IMR-90 (cell line): ENCODE measurements at regions of chr7 and their contacts with region 1.

Region 1: GRCh38 chr7:41010418-41010817 is 692.5 kb downstream of the INHBA start:
- DNase-seq: peak; percentile 10
- ATAC-seq: peak; percentile 54
- H3K4me3 ChIP-seq: no peak overlapping the region
- H3K27ac ChIP-seq: 0 out of 2 replicates have a peak overlapping the region, but pooled peaks have one; percentile 34
- H3K4me1 ChIP-seq: peaks cover 13% of the 10 kb centered on the region
- H3K27me3 ChIP-seq: no peaks in the 10 kb centered on the region
- CTCF ChIP-seq: no peak
- POLR2A ChIP-seq: no peak
- RAD21 ChIP-seq: no peak

Region 2: GRCh38 chr7:40374575-40374974 is 635.8 kb before region 1 on chr7:
- CTCF ChIA-PET with region 1: no interaction called
- POLR2A ChIA-PET with region 1: no interaction called
- dilution Hi-C with region 1: no loop called
- in situ Hi-C with region 1: no loop called
- intact Hi-C with region 1: no loop called
- DNase-seq: peak; percentile 22
- ATAC-seq: no peak
- H3K4me3 ChIP-seq: no peak overlapping the region
- H3K27ac ChIP-seq: no peak overlapping the region
- H3K4me1 ChIP-seq: no peaks in the 10 kb centered on the region
- H3K27me3 ChIP-seq: no peaks in the 10 kb centered on the region
- CTCF ChIP-seq: no peak
- POLR2A ChIP-seq: no peak
- RAD21 ChIP-seq: no peak

Region 3: GRCh38 chr7:40658729-40659128 is 351.7 kb before region 1 on chr7:
- CTCF ChIA-PET with region 1: no interaction called
- POLR2A ChIA-PET with region 1: no interaction called
- dilution Hi-C with region 1: no loop called
- in situ Hi-C with region 1: no loop called
- intact Hi-C with region 1: no loop called
- DNase-seq: peak; percentile 57
- ATAC-seq: peak; percentile 29; the same call in 1 of the 2 replicates
- H3K4me3 ChIP-seq: no peak overlapping the region
- H3K27ac ChIP-seq: no peak overlapping the region
- H3K4me1 ChIP-seq: no peaks in the 10 kb centered on the region; the same call in 1 of the 2 replicates
- H3K27me3 ChIP-seq: no peaks in the 10 kb centered on the region
- CTCF ChIP-seq: no peak
- POLR2A ChIP-seq: no peak
- RAD21 ChIP-seq: no peak

Region 4: GRCh38 chr7:41203542-41203941 is 193.1 kb after region 1 on chr7:
- CTCF ChIA-PET with region 1: no interaction called
- POLR2A ChIA-PET with region 1: interaction called, 19 read pairs
- dilution Hi-C with region 1: no loop called
- in situ Hi-C with region 1: no loop called
- intact Hi-C with region 1: no loop called
- DNase-seq: peak; percentile 24
- ATAC-seq: no peak
- H3K4me3 ChIP-seq: no peak overlapping the region
- H3K27ac ChIP-seq: no peak overlapping the region
- H3K4me1 ChIP-seq: no peaks in the 10 kb centered on the region
- H3K27me3 ChIP-seq: no peaks in the 10 kb centered on the region
- CTCF ChIP-seq: no peak
- POLR2A ChIP-seq: no peak
- RAD21 ChIP-seq: no peak